CD8-positive, alpha-beta T cell (primary cell): ENCODE measurements at regions of chr2 and their contacts with region 1.

Region 1: GRCh38 chr2:201275990-201276389 is 15.7 kb downstream of the CASP8 start:
- DNase-seq: peak in 1 of 9 experiments; percentile 40
- ATAC-seq: peak; percentile 51
- H3K4me3 ChIP-seq: no peak overlapping the region
- H3K4me3 Mint-ChIP-seq: no peak overlapping the region
- H3K27ac ChIP-seq: no peak overlapping the region
- H3K27ac Mint-ChIP-seq: peak overlapping the region; percentile 25
- H3K4me1 ChIP-seq: peaks cover 20% of the 10 kb centered on the region
- H3K4me1 Mint-ChIP-seq: peaks cover 55% of the 10 kb centered on the region
- H3K27me3 ChIP-seq: no peaks in the 10 kb centered on the region
- H3K27me3 Mint-ChIP-seq: no peaks in the 10 kb centered on the region
- CTCF ChIP-seq: no peak

Region 2: DNA sequence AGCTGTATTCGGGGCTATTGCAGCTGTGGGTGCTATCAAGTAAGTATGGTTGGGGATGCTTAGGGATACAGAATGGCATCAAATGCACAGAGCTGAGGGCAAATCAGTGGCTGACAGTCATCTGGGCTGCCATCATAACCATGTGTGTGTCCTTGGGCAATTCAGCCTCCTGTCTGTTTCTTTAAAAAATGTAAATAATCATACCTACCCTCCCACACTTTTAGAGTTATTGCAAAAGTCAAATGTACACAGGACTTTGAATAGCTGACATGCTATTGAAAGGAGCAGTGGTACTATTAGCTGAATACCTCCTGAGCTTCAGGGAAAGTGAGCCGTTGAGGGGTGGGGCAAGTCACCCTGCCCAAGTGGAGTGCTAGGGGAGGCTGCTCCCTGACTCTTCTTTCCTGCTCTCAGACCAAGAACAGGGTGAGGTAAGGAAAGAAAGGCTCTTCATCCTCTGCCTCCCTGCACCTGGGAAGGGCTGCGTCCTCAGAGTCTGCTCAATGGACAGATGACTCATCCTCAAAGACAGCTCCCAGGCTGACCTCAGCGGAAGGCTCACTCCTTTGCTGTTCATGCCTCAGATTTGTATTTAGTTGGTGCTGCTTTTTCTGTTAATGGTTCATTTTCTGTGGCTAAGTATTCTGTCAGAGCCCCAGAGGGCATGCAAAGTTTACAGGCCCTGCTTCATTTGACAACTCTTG is 519.2 kb before region 1 on chr2:
- CTCF ChIA-PET with region 1: no interaction called
- POLR2A ChIA-PET with region 1: no interaction called
- intact Hi-C with region 1: no loop called
- DNase-seq: no peak
- ATAC-seq: no peak
- H3K4me3 ChIP-seq: no peak overlapping the region
- H3K4me3 Mint-ChIP-seq: no peak overlapping the region
- H3K27ac ChIP-seq: no peak overlapping the region
- H3K27ac Mint-ChIP-seq: no peak overlapping the region
- H3K4me1 ChIP-seq: no peaks in the 10 kb centered on the region
- H3K4me1 Mint-ChIP-seq: peaks cover 2% of the 10 kb centered on the region
- H3K27me3 ChIP-seq: no peaks in the 10 kb centered on the region
- H3K27me3 Mint-ChIP-seq: peaks cover 4% of the 10 kb centered on the region
- CTCF ChIP-seq: no peak

Region 3: DNA sequence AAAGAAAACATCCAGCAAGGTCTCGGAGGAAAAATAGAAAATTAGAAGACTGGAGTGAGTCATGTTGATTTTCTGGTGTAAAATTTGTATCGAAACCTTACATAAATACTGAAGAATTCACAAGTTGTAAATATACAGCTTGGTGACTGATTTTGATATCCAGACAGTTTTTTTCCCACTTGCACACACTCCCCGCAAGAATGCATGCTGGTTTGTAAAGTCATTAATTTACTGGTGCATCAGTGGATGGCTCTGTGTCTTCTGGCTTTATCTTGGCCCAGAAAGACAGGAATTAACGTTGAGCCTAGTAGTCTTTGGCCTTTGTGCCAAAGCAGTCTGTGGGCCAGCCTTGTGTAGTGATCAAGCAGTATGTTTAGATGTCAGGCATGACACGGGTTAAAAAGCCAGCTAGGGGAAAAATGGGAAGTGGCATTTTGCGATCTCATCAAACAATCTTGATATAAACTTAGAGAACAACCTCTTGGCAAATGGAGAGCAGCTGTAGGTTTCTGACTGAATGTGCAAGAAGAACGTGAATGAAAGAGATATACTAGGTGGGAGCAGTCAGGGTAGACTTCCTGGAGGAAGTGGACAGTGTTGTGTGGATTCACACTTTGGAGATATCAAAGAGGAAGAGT is 38.4 kb before region 1 on chr2:
- CTCF ChIA-PET with region 1: interaction called, 49 read pairs
- POLR2A ChIA-PET with region 1: interaction called, 5 read pairs
- intact Hi-C with region 1: loop called (anchors 1 to 5 kb)
- DNase-seq: no peak
- ATAC-seq: no peak
- H3K4me3 ChIP-seq: peak overlapping the region in 1 of 2 experiments; percentile 0
- H3K4me3 Mint-ChIP-seq: peak overlapping the region; percentile 26
- H3K27ac ChIP-seq: no peak overlapping the region
- H3K27ac Mint-ChIP-seq: peak overlapping the region; percentile 79
- H3K4me1 ChIP-seq: peaks cover 49% of the 10 kb centered on the region
- H3K4me1 Mint-ChIP-seq: peaks cover 65% of the 10 kb centered on the region
- H3K27me3 ChIP-seq: no peaks in the 10 kb centered on the region
- H3K27me3 Mint-ChIP-seq: no peaks in the 10 kb centered on the region
- CTCF ChIP-seq: no peak

Region 4: DNA sequence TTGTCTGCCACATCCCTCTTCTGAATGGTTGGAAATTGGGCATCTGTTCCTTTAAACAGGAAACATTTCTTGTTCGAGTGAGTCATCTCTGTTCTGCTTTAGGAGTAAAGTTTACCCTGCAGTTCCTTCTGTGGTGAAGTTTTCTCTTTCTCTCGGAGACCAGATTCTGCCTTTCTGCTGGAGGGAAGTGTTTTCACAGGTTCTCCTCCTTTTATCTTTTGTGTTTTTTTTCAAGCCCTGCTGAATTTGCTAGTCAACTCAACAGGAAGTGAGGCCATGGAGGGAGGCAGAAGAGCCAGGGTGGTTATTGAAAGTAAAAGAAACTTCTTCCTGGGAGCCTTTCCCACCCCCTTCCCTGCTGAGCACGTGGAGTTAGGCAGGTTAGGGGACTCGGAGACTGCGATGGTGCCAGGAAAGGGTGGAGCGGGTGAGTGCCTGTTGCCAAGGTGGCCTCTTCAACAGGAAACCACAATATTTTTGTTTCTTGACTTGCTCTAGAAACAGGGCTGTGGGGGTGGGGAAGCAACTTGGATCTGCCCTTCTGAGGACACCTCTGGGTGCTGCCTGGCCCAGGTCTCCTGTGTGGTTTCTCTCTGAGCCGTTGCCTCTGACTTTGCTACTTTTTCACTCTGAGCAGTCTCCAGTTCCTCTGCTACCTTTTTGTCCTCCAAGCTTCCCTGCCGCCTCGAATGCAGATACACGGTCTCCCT is 17.9 kb before region 1 on chr2:
- CTCF ChIA-PET with region 1: interaction called, 19 read pairs
- POLR2A ChIA-PET with region 1: interaction called, 7 read pairs
- intact Hi-C with region 1: no loop called
- DNase-seq: peak; percentile 87 to 99 (median 94)
- ATAC-seq: peak; percentile 69
- H3K4me3 ChIP-seq: peak overlapping the region; percentile 45 to 48
- H3K4me3 Mint-ChIP-seq: peak overlapping the region; percentile 89
- H3K27ac ChIP-seq: peak overlapping the region; percentile 85 to 93
- H3K27ac Mint-ChIP-seq: peak overlapping the region; percentile 97
- H3K4me1 ChIP-seq: peaks cover 68% of the 10 kb centered on the region
- H3K4me1 Mint-ChIP-seq: peaks cover 75% of the 10 kb centered on the region
- H3K27me3 ChIP-seq: no peaks in the 10 kb centered on the region
- H3K27me3 Mint-ChIP-seq: no peaks in the 10 kb centered on the region
- CTCF ChIP-seq: no peak

Region 5: GRCh38 chr2:201363857-201364560 is 88.0 kb after region 1 on chr2:
- CTCF ChIA-PET with region 1: interaction called, 10 read pairs
- POLR2A ChIA-PET with region 1: interaction called, 5 read pairs
- intact Hi-C with region 1: loop called in 1 of 2 experiments (anchors 5 kb)
- DNase-seq: peak in 5 of 9 experiments; percentile 12 to 75 (median 60)
- ATAC-seq: peak; percentile 98
- H3K4me3 ChIP-seq: no peak overlapping the region
- H3K4me3 Mint-ChIP-seq: no peak overlapping the region
- H3K27ac ChIP-seq: no peak overlapping the region
- H3K27ac Mint-ChIP-seq: peak overlapping the region; percentile 37
- H3K4me1 ChIP-seq: peaks cover 31% of the 10 kb centered on the region
- H3K4me1 Mint-ChIP-seq: peaks cover 34% of the 10 kb centered on the region
- H3K27me3 ChIP-seq: no peaks in the 10 kb centered on the region
- H3K27me3 Mint-ChIP-seq: no peaks in the 10 kb centered on the region
- CTCF ChIP-seq: peak; percentile 87

Region 6: DNA sequence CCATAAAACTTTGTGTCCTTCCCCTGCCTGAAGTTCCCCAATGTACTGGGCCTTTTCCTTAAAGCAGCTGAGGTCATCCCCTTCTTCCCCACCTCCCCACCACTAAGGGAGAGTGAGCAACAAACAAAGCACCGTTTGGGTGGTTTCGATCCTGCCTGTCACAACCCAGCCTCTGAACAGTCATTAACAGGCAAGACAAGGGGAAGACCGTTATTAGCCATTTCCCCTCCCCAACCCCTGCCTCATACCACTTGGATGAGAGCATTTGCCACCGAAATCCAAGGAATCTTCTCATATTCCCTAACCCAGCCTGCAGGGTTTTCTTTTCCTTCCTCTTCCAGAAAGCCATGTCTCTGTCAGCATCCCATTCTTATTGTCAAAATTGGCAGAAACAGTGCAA is 241.1 kb after region 1 on chr2:
- CTCF ChIA-PET with region 1: no interaction called
- POLR2A ChIA-PET with region 1: no interaction called
- intact Hi-C with region 1: no loop called
- DNase-seq: no peak
- ATAC-seq: no peak
- H3K4me3 ChIP-seq: no peak overlapping the region
- H3K4me3 Mint-ChIP-seq: no peak overlapping the region
- H3K27ac ChIP-seq: no peak overlapping the region
- H3K27ac Mint-ChIP-seq: no peak overlapping the region
- H3K4me1 ChIP-seq: no peaks in the 10 kb centered on the region
- H3K4me1 Mint-ChIP-seq: no peaks in the 10 kb centered on the region
- H3K27me3 ChIP-seq: no peaks in the 10 kb centered on the region
- H3K27me3 Mint-ChIP-seq: no peaks in the 10 kb centered on the region
- CTCF ChIP-seq: no peak